ENCODE measurements at regions of chr3 and their contacts with region 1.

Region 1: DNA sequence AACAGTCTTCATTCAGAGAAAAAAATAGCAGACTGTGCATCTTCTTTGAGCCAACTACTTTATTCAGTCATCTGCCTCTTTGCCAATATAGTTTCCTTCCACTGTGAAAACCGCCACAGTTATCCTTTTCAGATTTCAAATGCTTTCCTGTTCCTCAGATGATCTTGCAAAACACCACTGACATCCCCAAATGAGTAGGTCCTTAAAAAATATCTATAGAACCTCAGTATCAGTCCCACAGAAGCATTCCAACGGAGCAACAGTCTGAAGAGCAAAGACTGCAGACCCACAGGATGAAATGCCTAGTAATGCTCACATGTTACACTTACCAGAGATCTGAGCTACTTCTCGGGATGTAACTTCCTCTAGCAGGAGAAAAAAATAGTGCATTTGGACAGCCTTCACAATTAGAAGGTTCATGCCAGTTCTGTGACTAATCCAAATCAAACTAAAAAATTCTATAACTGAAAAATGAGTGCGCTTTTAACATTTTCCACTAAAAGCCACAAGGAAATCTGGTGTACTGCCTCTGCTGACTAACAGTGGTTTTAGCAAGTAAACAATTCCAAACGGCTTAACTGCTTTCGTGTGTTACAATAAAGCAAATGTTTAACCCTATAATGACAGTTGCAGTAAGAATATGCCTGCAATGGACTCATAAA is at the start of gene ANKRD28:
- DNase-seq: peak; percentile 17
- ATAC-seq: peak; percentile 78
- H3K4me3 Mint-ChIP-seq: peak within 1 kb of the TSS; percentile 69
- H3K27ac Mint-ChIP-seq: peak within 1 kb of the TSS; percentile 96
- H3K4me1 Mint-ChIP-seq: peaks cover 82% of the 10 kb centered on the region
- H3K27me3 Mint-ChIP-seq: no peaks in the 10 kb centered on the region
- total RNA-seq, gene ANKRD28: 27.3 to 28.4 TPM

Region 2: GRCh38 chr3:15361494-15362212 is 436.1 kb before region 1 on chr3:
- CTCF ChIA-PET with region 1: no interaction called
- POLR2A ChIA-PET with region 1: no interaction called
- intact Hi-C with region 1: loop called in 1 of 2 experiments (anchors 5 kb)
- DNase-seq: peak; percentile 83
- ATAC-seq: peak; percentile 76
- H3K4me3 Mint-ChIP-seq: peak overlapping the region; percentile 53
- H3K27ac Mint-ChIP-seq: peak overlapping the region; percentile 87
- H3K4me1 Mint-ChIP-seq: peaks cover 38% of the 10 kb centered on the region
- H3K27me3 Mint-ChIP-seq: peaks cover 2% of the 10 kb centered on the region

Region 3: DNA sequence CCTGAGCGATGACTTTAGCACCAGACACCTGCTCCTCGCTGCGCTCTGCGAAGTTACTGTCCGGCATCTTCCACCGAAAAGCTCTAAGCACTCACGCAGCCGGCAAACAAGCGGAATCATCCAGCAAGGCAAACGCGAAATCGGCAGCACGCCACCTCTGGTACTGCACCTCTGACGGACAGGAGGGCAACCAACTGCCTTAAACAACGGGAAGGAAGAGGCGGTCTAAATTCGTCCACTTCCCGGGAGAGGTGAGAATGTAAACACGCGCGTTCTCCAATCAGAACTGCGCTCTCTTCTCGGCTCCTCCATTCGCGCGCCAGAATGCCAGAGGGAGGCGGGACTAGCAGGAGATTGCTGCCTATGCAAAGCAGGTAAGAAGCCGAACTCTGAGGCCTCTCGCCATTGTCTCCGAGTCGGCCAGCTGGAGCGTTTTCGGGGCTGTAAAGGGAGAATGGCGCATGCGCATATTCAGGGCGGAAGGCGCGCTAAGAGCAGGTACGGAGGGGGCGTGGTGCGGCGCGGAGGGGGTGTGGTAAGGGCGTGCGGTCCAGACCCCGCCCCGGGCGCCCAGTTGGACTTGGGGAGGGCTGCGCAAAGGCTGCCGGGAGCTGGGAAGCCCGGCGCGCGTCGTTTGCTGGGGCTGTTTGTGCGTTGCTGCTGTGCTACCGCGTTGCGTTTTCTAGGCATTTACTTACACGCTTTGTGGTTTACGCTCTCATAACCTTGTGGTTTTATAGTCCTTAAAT is 196.2 kb before region 1 on chr3 and contains the starts of genes BTD and HACL1:
- CTCF ChIA-PET with region 1: no interaction called
- POLR2A ChIA-PET with region 1: no interaction called
- intact Hi-C with region 1: loop called in 1 of 2 experiments (anchors 2 kb)
- DNase-seq: peak; percentile 99
- ATAC-seq: peak; percentile 94
- H3K4me3 Mint-ChIP-seq: peak within 1 kb of the TSS; percentile 100
- H3K27ac Mint-ChIP-seq: peak within 1 kb of the TSS; percentile 98
- H3K4me1 Mint-ChIP-seq: peaks cover 41% of the 10 kb centered on the region
- H3K27me3 Mint-ChIP-seq: no peaks in the 10 kb centered on the region
- total RNA-seq, gene BTD: 3.8 to 4.4 TPM
- total RNA-seq, gene HACL1: 22.3 to 23.2 TPM

Region 4: GRCh38 chr3:15743587-15744009 is 54.2 kb before region 1 on chr3:
- CTCF ChIA-PET with region 1: no interaction called
- POLR2A ChIA-PET with region 1: no interaction called
- intact Hi-C with region 1: loop called (anchors 2 to 5 kb)
- DNase-seq: no peak
- ATAC-seq: no peak
- H3K4me3 Mint-ChIP-seq: no peak overlapping the region
- H3K27ac Mint-ChIP-seq: no peak overlapping the region
- H3K4me1 Mint-ChIP-seq: peaks cover 39% of the 10 kb centered on the region
- H3K27me3 Mint-ChIP-seq: no peaks in the 10 kb centered on the region

Region 5: GRCh38 chr3:15768421-15769255 is 29.1 kb before region 1 on chr3:
- CTCF ChIA-PET with region 1: interaction called, 6 read pairs
- POLR2A ChIA-PET with region 1: no interaction called
- intact Hi-C with region 1: loop called (anchors 1 to 2 kb)
- DNase-seq: no peak
- ATAC-seq: peak; percentile 93
- H3K4me3 Mint-ChIP-seq: no peak overlapping the region
- H3K27ac Mint-ChIP-seq: peak overlapping the region; percentile 82
- H3K4me1 Mint-ChIP-seq: peaks cover 42% of the 10 kb centered on the region
- H3K27me3 Mint-ChIP-seq: no peaks in the 10 kb centered on the region

Region 6: GRCh38 chr3:15831930-15832329 is 34.2 kb after region 1 on chr3:
- CTCF ChIA-PET with region 1: no interaction called
- POLR2A ChIA-PET with region 1: no interaction called
- intact Hi-C with region 1: no loop called
- DNase-seq: no peak
- ATAC-seq: no peak
- H3K4me3 Mint-ChIP-seq: no peak overlapping the region
- H3K27ac Mint-ChIP-seq: no peak overlapping the region
- H3K4me1 Mint-ChIP-seq: peaks cover 16% of the 10 kb centered on the region
- H3K27me3 Mint-ChIP-seq: no peaks in the 10 kb centered on the region

Region 7: DNA sequence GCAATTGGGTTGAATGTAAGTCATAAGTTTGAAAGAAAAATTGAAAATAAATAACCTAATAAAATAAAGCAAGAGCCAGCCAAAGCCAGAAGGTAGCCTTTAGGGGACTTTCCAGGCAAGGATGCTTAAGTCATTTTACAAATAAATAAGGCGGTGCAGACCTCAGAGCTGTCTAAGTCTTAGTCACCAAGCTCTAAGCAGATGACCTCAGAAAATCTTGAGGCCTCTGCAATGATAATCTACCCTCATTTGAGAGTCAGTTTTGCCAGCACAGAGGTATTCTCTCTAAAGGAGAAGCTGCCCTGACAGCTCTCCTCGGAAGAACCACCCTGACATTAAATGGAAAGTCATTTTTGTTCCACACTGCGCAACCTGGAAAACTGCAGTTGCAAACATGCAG is 581.1 kb after region 1 on chr3:
- CTCF ChIA-PET with region 1: no interaction called
- POLR2A ChIA-PET with region 1: no interaction called
- intact Hi-C with region 1: loop called in 1 of 2 experiments (anchors 5 kb)
- DNase-seq: peak; percentile 45
- ATAC-seq: peak; percentile 66
- H3K4me3 Mint-ChIP-seq: no peak overlapping the region
- H3K27ac Mint-ChIP-seq: peak overlapping the region; percentile 89
- H3K4me1 Mint-ChIP-seq: peaks cover 95% of the 10 kb centered on the region
- H3K27me3 Mint-ChIP-seq: no peaks in the 10 kb centered on the region

Measured in activated CD4-positive, alpha-beta T cell treated with anti-CD3 and anti-CD28 coated beads for 36 hours (primary cell).